CD4-positive, alpha-beta memory T cell (primary cell): ENCODE measurements at regions of chr2 and their contacts with region 1.

Region 1: DNA sequence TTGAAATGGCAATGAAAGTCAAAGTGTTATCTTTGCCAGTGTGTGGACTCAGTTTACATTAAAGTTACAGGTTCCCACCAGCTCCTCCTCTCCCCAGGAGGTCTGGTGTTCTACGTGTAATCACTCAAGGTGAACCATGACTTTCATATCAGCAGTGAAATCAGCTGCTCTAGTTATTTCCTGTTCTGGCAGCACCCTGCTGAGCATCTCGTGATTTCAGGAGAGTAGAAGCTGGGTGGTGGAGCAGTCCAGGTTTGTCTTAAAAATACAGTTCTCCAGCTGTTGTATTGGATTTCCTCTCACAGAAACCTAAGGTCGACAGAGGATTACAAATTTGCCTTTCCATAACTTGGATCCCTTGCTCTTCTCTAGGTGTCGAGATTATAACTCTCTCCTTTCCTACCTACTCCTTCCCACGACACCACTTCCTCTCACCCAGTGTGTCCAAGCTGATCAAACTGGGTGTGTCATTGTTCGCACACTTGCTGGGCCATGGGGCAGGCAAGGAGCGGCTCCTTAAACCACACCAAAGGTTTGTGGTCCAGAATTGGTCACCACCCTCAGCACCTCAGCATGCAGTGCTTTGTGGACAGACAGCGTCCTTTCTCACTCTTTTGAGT is 13.0 kb upstream of the ARHGAP25 start:
- DNase-seq: peak; percentile 64 to 78 (median 70)
- H3K4me3 ChIP-seq: peak overlapping the region in 1 of 2 donors; percentile 6
- H3K4me3 Mint-ChIP-seq: peak overlapping the region; percentile 63 to 89 (median 83)
- H3K27ac ChIP-seq: peak overlapping the region; percentile 54
- H3K27ac Mint-ChIP-seq: peak overlapping the region; percentile 91 to 98 (median 96)
- H3K4me1 ChIP-seq: peaks cover 96% of the 10 kb centered on the region
- H3K4me1 Mint-ChIP-seq: peaks cover 75 to 99% (median 90%) of the 10 kb centered on the region in 4 donors
- H3K27me3 ChIP-seq: no peaks in the 10 kb centered on the region
- H3K27me3 Mint-ChIP-seq: no peaks in the 10 kb centered on the region

Region 2: DNA sequence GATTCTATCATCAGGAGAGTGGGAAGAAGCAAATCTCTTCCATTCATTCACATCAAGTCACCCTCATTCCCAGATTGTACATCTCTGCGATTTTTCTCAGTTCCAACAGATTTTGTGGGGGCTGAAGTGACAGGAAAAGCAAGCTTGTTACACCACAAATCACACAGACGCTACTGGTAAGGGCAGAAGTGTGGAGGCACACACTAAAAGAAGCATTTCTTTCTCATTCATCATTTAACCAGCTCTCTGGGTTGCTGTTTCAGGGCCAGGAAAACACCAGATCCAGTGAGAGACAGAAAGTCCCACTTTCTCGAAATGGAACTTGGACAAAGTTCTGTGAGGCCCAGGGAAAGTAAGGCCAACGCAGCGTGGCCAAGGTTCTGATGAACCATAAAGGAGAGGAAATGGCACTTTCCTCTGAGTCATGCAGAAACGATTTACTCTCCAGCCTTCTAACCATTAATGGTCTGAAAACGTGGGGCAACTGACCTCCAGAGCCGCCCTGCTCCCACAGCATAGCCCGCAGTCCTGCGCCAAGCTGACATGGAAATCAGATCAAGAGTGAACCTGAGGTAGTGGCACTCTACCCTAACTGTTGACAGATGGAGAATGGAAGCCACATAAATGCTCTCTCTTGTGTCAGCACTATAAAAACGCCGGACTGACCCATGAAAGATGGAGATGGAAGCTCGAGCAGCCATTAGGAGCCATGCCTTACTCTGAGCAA is 849.7 kb before region 1 on chr2:
- CTCF ChIA-PET with region 1: no interaction called
- POLR2A ChIA-PET with region 1: no interaction called
- intact Hi-C with region 1: no loop called
- DNase-seq: no peak
- H3K4me3 ChIP-seq: no peak overlapping the region
- H3K4me3 Mint-ChIP-seq: no peak overlapping the region
- H3K27ac ChIP-seq: no peak overlapping the region
- H3K27ac Mint-ChIP-seq: no peak overlapping the region
- H3K4me1 ChIP-seq: no peaks in the 10 kb centered on the region
- H3K4me1 Mint-ChIP-seq: no peaks in the 10 kb centered on the region
- H3K27me3 ChIP-seq: no peaks in the 10 kb centered on the region
- H3K27me3 Mint-ChIP-seq: peaks cover 3 to 7% of the 10 kb centered on the region in 2 donors

Region 3: GRCh38 chr2:68588589-68588988 is 133.0 kb before region 1 on chr2:
- CTCF ChIA-PET with region 1: no interaction called
- POLR2A ChIA-PET with region 1: no interaction called
- intact Hi-C with region 1: no loop called
- DNase-seq: no peak
- H3K4me3 ChIP-seq: no peak overlapping the region
- H3K4me3 Mint-ChIP-seq: no peak overlapping the region
- H3K27ac ChIP-seq: no peak overlapping the region
- H3K27ac Mint-ChIP-seq: no peak overlapping the region
- H3K4me1 ChIP-seq: no peaks in the 10 kb centered on the region
- H3K4me1 Mint-ChIP-seq: peaks cover 0 to 2% (median 0%) of the 10 kb centered on the region in 4 donors
- H3K27me3 ChIP-seq: no peaks in the 10 kb centered on the region
- H3K27me3 Mint-ChIP-seq: no peaks in the 10 kb centered on the region

Region 4: GRCh38 chr2:68689553-68690537 is 31.7 kb before region 1 on chr2:
- CTCF ChIA-PET with region 1: no interaction called
- POLR2A ChIA-PET with region 1: no interaction called
- intact Hi-C with region 1: no loop called
- DNase-seq: no peak
- H3K4me3 ChIP-seq: no peak overlapping the region
- H3K4me3 Mint-ChIP-seq: no peak overlapping the region
- H3K27ac ChIP-seq: no peak overlapping the region
- H3K27ac Mint-ChIP-seq: no peak overlapping the region
- H3K4me1 ChIP-seq: no peaks in the 10 kb centered on the region
- H3K4me1 Mint-ChIP-seq: peaks cover 5 to 11% (median 9%) of the 10 kb centered on the region in 4 donors
- H3K27me3 ChIP-seq: no peaks in the 10 kb centered on the region
- H3K27me3 Mint-ChIP-seq: peaks cover 0 to 2% of the 10 kb centered on the region in 2 donors

Region 5: DNA sequence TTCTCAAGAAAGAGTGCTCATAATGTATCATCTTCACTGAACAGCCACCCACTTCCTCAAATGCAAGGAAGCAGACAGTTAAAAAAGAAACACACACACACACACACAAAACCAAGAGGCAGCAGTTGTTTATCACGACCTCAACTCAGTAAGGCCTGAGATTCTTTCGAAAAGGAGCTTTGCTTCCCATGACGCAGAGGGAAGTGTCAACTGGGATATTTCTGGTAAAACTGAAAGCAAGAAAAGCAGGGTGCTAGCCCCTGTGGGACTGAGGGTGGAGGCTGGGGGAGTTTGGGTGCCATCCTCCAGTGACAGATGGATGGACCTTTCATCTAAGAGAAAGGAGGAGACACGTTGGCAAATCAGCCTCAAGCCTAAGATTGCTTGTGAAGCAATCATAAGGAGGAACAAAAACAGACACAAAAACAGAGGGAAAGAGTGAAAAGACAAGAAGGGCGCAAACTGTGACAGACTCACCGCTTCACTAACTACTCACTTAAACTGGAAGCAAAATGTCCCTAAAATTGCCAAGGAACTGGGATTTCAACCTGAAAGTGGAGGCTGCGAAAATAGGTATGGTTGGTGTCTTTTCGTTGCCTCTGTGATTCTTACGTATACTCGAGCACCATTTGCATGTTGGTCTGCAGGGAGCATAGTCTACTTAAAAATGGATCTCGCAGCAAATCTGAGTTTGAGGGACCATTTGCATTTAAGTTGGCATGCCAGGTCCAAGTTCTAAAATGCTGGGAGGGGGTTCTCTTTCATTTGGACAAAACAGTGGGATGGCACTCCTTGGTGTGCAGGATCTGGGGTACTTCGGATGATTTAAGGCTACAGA is 13.3 kb after region 1 on chr2 and contains the start of gene ARHGAP25:
- CTCF ChIA-PET with region 1: interaction called, 745 read pairs
- POLR2A ChIA-PET with region 1: interaction called, 659 read pairs
- intact Hi-C with region 1: loop called (anchors 1 kb)
- DNase-seq: peak; percentile 58 to 79 (median 61)
- H3K4me3 ChIP-seq: peak within 1 kb of the TSS; percentile 83 to 99
- H3K4me3 Mint-ChIP-seq: no peak within 1 kb of the TSS
- H3K27ac ChIP-seq: peak within 1 kb of the TSS; percentile 81
- H3K27ac Mint-ChIP-seq: no peak within 1 kb of the TSS
- H3K4me1 ChIP-seq: peaks cover 54% of the 10 kb centered on the region
- H3K4me1 Mint-ChIP-seq: peaks cover 23 to 44% (median 34%) of the 10 kb centered on the region in 4 donors
- H3K27me3 ChIP-seq: no peaks in the 10 kb centered on the region
- H3K27me3 Mint-ChIP-seq: no peaks in the 10 kb centered on the region
- total RNA-seq, gene ARHGAP25: 162 to 163 TPM

Region 6: DNA sequence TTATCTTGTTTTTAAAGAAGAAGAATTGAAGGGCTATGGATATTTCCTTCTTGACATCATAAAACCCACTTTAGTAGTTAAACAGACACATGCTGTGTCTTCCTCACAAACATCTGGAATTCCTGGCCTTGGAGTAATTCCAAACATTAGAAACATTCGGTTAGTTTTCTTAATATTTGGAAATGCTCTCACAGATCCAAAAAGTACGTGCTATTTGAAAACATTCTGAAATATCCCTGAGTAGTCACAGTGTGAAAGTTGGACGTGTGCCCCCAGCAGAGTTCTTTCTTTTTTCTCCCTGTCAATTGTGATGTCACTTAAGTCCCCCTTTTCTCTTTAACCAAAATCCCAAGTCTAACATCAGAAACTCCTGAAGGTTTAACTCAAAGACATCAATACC is 382.7 kb after region 1 on chr2:
- CTCF ChIA-PET with region 1: no interaction called
- POLR2A ChIA-PET with region 1: no interaction called
- intact Hi-C with region 1: no loop called
- DNase-seq: no peak
- H3K4me3 ChIP-seq: no peak overlapping the region
- H3K4me3 Mint-ChIP-seq: no peak overlapping the region
- H3K27ac ChIP-seq: no peak overlapping the region
- H3K27ac Mint-ChIP-seq: no peak overlapping the region
- H3K4me1 ChIP-seq: no peaks in the 10 kb centered on the region
- H3K4me1 Mint-ChIP-seq: no peaks in the 10 kb centered on the region
- H3K27me3 ChIP-seq: no peaks in the 10 kb centered on the region
- H3K27me3 Mint-ChIP-seq: peaks cover 7 to 13% of the 10 kb centered on the region in 2 donors